Esophagus muscularis mucosa (tissue), 4 donors: ENCODE measurements at regions of chr3 and their contacts with region 1.

Region 1: DNA sequence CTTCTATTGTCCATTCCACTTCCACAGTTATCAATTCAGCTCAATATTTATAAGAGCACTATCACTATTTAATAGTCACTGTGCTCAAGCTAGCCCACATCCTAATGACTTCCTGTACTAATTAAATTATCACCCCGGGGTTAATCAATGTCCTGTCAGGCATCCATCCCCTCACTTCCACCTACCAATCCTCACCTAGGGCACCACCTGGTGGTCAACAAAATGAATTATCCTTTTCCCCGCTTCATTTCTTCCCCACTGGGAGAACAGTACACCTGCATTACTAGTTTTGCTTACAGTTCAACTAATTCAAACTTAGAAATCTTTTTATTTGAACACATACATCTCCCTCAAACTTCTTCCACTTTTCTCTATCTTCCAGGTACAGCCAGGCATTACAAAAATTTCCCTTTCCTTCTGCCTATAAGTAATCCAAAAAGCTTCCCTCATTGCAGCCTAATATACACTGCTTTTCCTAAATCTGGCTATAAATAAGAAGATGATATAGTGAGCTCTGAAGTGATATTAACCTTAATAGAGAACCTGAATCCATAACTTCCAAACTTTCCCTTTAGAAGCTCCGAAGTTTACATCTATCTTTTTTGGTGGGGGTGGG is 68.5 kb downstream of the TMCC1 start:
- DNase-seq: no peak
- H3K4me3 ChIP-seq: no peak overlapping the region
- H3K27ac ChIP-seq: no peak overlapping the region
- H3K4me1 ChIP-seq: peaks cover 0 to 25% (median 12%) of the 10 kb centered on the region in 4 donors
- H3K27me3 ChIP-seq: no peaks in the 10 kb centered on the region
- CTCF ChIP-seq: peak; percentile 54 to 64 (median 63)
- EP300 ChIP-seq: no peak
- POLR2A ChIP-seq: no peak

Region 2: DNA sequence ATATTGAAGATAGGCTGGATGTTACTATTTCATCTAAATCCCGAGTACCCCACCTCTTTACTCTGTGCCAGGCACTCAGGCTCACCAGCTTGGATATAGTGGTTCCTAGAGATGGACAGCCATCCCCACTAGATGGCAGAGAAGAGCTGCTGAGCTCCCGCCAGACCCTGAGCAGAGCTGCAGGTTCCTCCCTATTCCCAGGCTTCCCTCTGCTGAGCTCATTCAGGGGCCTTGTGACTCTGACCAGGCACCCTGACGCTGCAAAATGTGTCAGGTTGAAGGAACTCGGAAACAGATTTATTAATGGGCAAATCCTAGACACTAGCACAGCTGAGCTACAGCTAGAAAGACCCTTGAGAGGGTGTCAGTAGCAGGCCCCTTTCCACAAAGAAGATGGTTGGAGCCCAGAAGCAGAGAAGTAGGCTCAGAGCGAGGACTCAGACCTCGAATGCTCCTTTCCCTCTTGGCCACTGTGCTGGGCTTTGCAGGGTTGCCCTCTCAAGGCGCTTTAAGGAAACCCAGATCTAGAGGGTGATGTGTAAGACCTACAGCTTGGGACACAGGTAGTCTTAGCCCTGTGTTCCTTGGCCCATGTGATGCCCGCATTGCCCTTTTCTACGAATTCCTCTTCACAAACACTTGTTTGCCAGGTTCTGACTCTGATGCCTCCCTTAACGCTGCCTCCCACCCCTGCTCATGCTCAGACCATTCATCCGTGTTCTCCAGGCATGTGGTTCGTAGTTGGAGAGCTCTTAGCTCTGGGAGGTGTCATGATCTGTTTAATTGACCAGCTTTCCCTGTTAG is 334.6 kb before region 1 on chr3:
- intact Hi-C with region 1: loop called (anchors 2 kb)
- DNase-seq: peak; percentile 93
- H3K4me3 ChIP-seq: no peak overlapping the region
- H3K27ac ChIP-seq: peak overlapping the region; percentile 62 to 73 (median 68)
- H3K4me1 ChIP-seq: peaks cover 18 to 34% (median 22%) of the 10 kb centered on the region in 4 donors
- H3K27me3 ChIP-seq: no peaks in the 10 kb centered on the region
- CTCF ChIP-seq: peak; percentile 80 to 84 (median 81)
- EP300 ChIP-seq: no peak
- POLR2A ChIP-seq: no peak

Region 3: DNA sequence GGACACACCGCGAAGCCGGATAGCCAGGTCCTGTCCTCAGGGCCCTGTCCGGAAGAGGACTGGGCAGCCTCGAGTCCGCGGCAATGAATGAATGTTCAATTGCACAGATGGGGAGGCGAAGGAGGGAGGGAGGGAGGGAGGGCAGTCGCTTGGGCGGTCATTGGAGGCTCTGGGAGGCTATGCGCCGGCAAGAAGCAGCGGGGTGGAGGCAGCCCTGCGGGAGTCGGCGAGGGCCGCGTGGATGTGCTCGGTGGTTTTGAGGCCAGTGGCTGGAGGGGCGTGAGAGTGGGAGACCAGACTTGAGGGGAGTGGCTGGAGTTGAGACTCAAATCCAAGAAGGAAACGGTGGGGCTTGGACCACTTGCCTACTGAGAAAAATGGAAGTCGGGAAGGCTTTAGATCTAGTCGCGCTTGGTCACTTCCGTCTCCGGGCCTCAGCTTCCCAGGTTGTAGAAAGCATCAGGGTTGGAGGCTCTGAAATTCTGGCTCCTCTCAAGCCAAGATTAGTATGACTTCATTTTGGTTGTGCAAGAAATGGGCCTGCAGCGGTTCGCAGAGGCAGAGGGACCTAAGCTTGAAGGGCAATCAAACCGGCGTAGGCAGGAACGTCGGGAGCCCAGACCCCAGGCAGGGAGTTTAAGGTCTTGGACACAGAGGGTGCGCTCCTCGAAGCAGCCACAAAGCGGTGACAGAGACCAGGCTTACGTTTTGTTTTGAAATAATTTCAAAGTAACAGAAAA is 197.4 kb before region 1 on chr3:
- intact Hi-C with region 1: loop called (anchors 5 kb)
- DNase-seq: no peak
- H3K4me3 ChIP-seq: peak overlapping the region; percentile 61 to 75 (median 68)
- H3K27ac ChIP-seq: peak overlapping the region; percentile 91 to 99 (median 92)
- H3K4me1 ChIP-seq: peaks cover 57 to 62% (median 61%) of the 10 kb centered on the region in 4 donors
- H3K27me3 ChIP-seq: no peaks in the 10 kb centered on the region
- CTCF ChIP-seq: peak; percentile 71 to 80 (median 77)
- EP300 ChIP-seq: no peak
- POLR2A ChIP-seq: no peak

Region 4: GRCh38 chr3:129650256-129650872 is 174.7 kb before region 1 on chr3:
- intact Hi-C with region 1: loop called (anchors 2 kb)
- DNase-seq: peak; percentile 93
- H3K4me3 ChIP-seq: no peak overlapping the region
- H3K27ac ChIP-seq: no peak overlapping the region
- H3K4me1 ChIP-seq: peaks cover 7 to 34% (median 22%) of the 10 kb centered on the region in 4 donors
- H3K27me3 ChIP-seq: no peaks in the 10 kb centered on the region
- CTCF ChIP-seq: peak; percentile 73 to 83 (median 76)
- EP300 ChIP-seq: no peak
- POLR2A ChIP-seq: no peak